ENCODE measurements at regions of chr6 and their contacts with region 1.

Region 1: GRCh38 chr6:35064757-35065440 is 76.2 kb downstream of the TCP11 start:
- DNase-seq: no peak
- H3K4me3 ChIP-seq: no peak overlapping the region
- H3K27ac ChIP-seq: peak overlapping the region; percentile 16 to 25
- H3K4me1 ChIP-seq: no peaks in the 10 kb centered on the region
- H3K27me3 ChIP-seq: no peaks in the 10 kb centered on the region
- CTCF ChIP-seq: no peak
- POLR2A ChIP-seq: no peak

Region 2: GRCh38 chr6:34887753-34888513 is 177.0 kb before region 1 on chr6 and contains the start of gene TAF11:
- intact Hi-C with region 1: no loop called
- DNase-seq: peak; percentile 93
- H3K4me3 ChIP-seq: peak within 1 kb of the TSS; percentile 59 to 81 (median 75)
- H3K27ac ChIP-seq: peak within 1 kb of the TSS; percentile 87 to 94
- H3K4me1 ChIP-seq: peaks cover 0 to 12% of the 10 kb centered on the region in 2 donors
- H3K27me3 ChIP-seq: no peaks in the 10 kb centered on the region
- CTCF ChIP-seq: no peak
- POLR2A ChIP-seq: peak; percentile 66
- total RNA-seq, gene TAF11: 17.4 to 24.2 (median 19.3) TPM

Region 3: GRCh38 chr6:35108309-35108885 is 43.5 kb after region 1 on chr6:
- intact Hi-C with region 1: no loop called
- DNase-seq: no peak
- H3K4me3 ChIP-seq: no peak overlapping the region
- H3K27ac ChIP-seq: no peak overlapping the region
- H3K4me1 ChIP-seq: no peaks in the 10 kb centered on the region
- H3K27me3 ChIP-seq: no peaks in the 10 kb centered on the region
- CTCF ChIP-seq: no peak
- POLR2A ChIP-seq: no peak

Region 4: DNA sequence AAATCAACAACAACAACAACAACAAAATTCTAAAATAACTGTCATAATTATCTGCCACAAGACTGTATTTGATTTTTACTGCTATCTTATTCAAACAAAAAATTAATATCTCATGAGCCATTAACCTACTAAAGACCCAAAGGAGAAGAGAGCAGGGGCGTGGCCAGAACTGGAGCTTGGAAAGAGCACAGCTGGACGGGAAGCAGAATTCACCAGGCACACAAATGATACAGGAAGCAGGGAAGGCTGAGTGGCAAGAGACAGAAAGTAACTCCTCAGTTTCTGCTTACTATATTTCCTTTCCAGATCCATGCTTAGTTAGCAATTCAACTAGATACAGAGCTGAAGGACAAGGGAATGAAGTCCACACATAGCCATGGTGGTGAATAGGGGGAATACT is 569.4 kb after region 1 on chr6:
- intact Hi-C with region 1: loop called (anchors 10 kb)
- DNase-seq: no peak
- H3K4me3 ChIP-seq: no peak overlapping the region
- H3K27ac ChIP-seq: no peak overlapping the region
- H3K4me1 ChIP-seq: no peaks in the 10 kb centered on the region
- H3K27me3 ChIP-seq: no peaks in the 10 kb centered on the region
- CTCF ChIP-seq: no peak
- POLR2A ChIP-seq: no peak

Measured in breast epithelium (tissue), 4 donors.